ENCODE measurements at regions of chr6 and their contacts with region 1.

Region 1: DNA sequence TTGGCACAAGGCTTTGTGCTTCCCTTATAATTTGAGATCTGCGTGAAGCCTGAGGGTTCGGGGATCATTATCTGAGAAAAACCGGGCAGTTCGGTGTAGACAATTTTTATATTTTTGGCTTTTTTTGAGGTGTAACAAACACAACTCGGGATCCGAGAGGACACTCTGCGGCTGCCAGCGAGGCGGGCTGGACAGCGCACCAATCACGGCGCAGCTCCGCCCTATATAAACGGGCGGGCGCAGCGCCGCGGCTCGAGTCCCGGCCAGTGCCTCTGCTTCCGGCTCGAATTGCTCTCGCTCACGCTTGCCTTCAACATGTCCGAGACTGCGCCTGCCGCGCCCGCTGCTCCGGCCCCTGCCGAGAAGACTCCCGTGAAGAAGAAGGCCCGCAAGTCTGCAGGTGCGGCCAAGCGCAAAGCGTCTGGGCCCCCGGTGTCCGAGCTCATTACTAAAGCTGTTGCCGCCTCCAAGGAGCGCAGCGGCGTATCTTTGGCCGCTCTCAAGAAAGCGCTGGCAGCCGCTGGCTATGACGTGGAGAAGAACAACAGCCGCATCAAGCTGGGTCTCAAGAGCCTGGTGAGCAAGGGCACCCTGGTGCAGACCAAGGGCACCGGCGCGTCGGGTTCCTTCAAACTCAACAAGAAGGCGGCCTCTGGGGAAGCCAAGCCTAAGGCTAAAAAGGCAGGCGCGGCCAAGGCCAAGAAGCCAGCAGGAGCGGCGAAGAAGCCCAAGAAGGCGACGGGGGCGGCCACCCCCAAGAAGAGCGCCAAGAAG is 69.0 kb downstream of the HFE start:
- DNase-seq: peak; percentile 90
- H3K27ac ChIP-seq: peak overlapping the region; percentile 98
- CTCF ChIP-seq: no peak

Region 2: GRCh38 chr6:26122793-26123674 is 33.2 kb before region 1 on chr6:
- CTCF ChIA-PET with region 1: interaction called, 3 read pairs
- POLR2A ChIA-PET with region 1: interaction called, 94 read pairs
- DNase-seq: peak; percentile 91
- H3K27ac ChIP-seq: peak overlapping the region; percentile 99
- CTCF ChIP-seq: no peak

Region 3: DNA sequence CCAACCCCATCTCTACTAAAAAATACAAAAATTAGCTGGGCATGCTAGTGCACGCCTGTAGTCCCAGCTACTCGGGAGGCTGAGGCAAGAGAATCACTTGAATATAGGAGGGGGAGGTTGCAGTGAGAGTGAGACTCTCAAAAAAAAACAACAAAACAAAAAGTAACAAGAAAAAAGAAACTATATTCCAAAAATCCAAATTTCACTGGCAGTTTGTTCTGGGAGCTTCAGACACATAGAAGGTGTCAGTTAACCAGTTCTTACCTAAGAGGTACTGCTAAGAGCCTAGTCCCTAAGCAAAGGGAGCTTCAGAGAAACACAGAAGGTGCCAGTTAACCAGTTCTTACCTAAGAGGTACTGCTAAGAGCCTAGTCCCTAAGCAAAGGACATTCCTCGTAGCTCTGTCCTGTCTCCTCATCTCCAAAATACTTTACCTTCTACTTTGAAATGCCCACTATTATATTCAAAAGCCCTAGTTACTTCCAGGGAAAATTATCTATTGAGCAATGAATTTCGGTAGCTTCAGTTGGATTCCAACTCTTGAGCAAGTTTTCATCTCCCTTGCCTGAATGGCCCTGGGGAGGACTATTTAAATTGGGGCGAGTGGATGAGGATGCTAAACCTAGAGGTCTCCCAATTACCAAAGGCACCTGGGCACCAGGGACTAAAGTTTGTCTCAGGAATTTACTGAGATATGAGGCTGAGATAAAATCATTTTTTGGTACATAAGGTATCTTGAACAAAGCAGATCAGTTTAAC is 28.1 kb before region 1 on chr6:
- CTCF ChIA-PET with region 1: interaction called, 3 read pairs
- POLR2A ChIA-PET with region 1: interaction called, 94 read pairs
- DNase-seq: no peak
- H3K27ac ChIP-seq: peak overlapping the region; percentile 58
- CTCF ChIP-seq: no peak

Region 4: GRCh38 chr6:26183581-26184366 is 27.5 kb after region 1 on chr6:
- CTCF ChIA-PET with region 1: no interaction called
- POLR2A ChIA-PET with region 1: interaction called, 21 read pairs
- DNase-seq: no peak
- H3K27ac ChIP-seq: peak overlapping the region; percentile 60
- CTCF ChIP-seq: no peak

Region 5: GRCh38 chr6:26196846-26197648 is 40.8 kb after region 1 on chr6:
- CTCF ChIA-PET with region 1: interaction called, 7 read pairs
- POLR2A ChIA-PET with region 1: interaction called, 11 read pairs
- DNase-seq: peak; percentile 92
- H3K27ac ChIP-seq: peak overlapping the region; percentile 95
- CTCF ChIP-seq: no peak

Region 6: GRCh38 chr6:26312501-26313390 is 156.5 kb after region 1 on chr6:
- CTCF ChIA-PET with region 1: no interaction called
- POLR2A ChIA-PET with region 1: no interaction called
- DNase-seq: no peak
- H3K27ac ChIP-seq: peak overlapping the region; percentile 53
- CTCF ChIP-seq: no peak

Measured in RWPE1 (cell line).